AG04449 (cell line): ENCODE measurements at regions of chr6 and their contacts with region 1.

Region 1: DNA sequence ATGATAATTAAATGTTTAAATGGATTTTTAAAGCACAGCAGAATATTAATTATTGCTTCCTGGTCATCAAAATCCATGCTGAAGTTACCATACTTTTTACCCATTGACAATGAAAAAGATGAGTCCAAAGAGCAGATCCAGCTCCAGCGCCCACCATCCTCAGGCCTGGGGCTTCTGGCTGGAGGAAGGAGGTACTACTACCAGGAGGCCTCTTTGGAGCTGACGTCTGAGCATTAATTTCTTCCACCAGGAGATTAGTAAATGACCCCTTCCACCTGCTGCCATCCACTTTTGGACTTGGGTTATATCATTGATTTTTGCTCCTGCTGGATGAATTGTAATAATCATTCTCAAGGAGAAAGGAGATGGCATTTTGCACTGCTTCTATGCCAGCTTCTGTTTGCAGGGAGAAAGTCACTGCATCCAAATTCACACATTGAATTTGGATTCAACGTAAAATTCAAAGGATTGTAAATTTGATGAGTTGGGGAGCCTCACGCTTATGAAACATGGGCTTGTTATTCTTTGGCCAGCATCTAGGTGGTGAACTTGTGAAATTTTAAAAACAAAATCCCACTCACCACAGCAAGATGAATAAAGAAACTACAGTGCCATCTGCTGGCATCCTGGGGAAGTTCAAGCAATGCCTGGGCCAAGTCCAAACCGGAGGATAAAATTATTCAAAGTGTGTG is 121.8 kb downstream of the SASH1 start:
- DNase-seq: peak; percentile 37
- H3K4me3 ChIP-seq: no peak overlapping the region
- CTCF ChIP-seq: peak; percentile 66

Region 2: DNA sequence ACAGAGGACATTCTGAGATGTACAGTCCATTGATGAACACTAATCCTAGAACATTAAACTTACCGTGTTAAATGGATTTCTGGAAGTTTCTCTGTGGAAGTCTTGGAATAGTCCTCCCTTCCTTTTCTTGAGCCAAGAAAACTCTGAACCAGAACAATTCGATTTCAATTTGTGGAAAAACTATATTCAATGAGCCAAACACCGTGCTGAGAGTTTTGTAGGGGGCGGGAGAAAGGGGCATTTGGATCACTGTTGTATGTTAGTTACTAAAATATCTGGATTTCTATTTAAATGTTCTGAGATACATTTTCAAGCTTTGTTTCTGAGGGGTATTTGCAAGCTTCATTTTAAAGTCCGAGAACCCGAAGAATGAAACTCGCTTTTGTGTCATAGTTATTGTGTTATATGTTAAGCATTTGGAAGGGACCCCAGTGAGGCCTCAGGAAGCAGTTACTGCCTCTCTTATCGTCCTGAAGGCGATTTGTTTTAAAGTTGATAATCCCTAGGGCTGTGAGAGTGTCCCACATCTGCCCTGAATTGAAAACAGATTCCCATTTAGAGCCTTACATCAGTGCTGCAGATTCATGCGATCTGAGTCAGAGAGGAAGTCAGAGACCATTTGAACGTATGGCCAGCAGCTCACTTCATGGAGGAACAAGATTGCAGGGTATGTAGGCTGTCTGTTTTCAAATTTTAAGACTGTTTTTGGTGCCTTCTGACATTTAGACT is 192.6 kb before region 1 on chr6:
- CTCF ChIA-PET with region 1: interaction called, 10 read pairs
- POLR2A ChIA-PET with region 1: interaction called, 3 read pairs
- DNase-seq: peak; percentile 94
- H3K4me3 ChIP-seq: peak overlapping the region; percentile 53
- CTCF ChIP-seq: no peak

Region 3: GRCh38 chr6:148479497-148479896 is 15.0 kb after region 1 on chr6:
- CTCF ChIA-PET with region 1: interaction called, 12 read pairs
- POLR2A ChIA-PET with region 1: no interaction called
- DNase-seq: no peak
- H3K4me3 ChIP-seq: no peak overlapping the region
- CTCF ChIP-seq: no peak